GM12878 (cell line): ENCODE measurements at regions of chr1 and their contacts with region 1.

Region 1: GRCh38 chr1:26363549-26364448 is 8.8 kb downstream of the ZNF683 start:
- DNase-seq: peak; percentile 16
- ATAC-seq: peak; percentile 91
- H3K4me3 ChIP-seq: no peak overlapping the region
- H3K27ac ChIP-seq: no peak overlapping the region
- H3K4me1 ChIP-seq: no peaks in the 10 kb centered on the region; the same call in 1 of the 2 replicates
- H3K27me3 ChIP-seq: peaks cover 3 to 5% of the 10 kb centered on the region in 2 experiments; a peak in 3 of 4 replicates
- CTCF ChIP-seq: peak; percentile 85 to 98 (median 98)
- EP300 ChIP-seq: no peak
- POLR2A ChIP-seq: no peak
- RAD21 ChIP-seq: peak; percentile 81

Region 2: DNA sequence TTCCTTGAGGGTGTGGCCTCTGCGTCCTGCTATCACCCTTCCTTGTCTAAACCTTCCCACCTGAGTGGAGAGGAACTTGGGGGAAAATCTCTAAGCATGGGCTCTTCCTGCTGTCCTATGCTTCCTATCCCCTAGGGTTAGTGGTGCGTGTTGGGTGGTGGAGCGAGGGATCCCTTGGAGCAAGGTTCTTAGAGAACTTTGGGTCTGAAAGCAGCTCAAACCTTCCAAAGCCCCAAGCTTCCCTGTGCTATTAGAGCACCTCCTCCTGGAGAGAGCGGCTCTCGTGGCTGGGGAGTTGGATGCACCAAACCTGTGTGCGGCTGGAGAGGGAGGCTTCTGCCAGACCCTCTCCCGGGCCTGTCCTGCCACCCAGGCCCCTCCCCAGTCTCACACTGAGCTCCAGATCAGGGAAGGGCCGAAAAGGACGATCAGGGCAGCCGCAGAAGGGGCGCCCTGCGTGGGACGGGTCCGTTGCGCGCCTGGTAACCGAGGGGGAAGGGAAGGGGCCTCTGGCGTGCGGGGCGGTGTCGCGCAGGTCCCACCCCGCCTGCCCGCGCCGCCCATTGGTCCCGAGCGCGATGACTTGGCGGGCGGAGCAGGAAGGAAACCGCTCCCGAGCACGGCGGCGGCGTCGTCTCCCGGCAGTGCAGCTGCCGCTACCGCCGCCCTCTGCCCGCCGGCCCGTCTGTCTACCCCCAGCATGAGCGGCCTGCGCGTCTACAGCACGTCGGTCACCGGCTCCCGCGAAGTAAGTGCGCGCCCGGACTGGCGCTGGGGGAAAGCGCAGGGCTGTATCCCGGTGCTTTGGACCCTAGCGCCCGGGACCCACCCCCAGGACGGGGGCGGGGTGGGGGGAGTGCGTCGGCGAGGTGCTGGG is 84.1 kb before region 1 on chr1 and contains the start of gene SH3BGRL3:
- CTCF ChIA-PET with region 1: interaction called, 89 read pairs
- POLR2A ChIA-PET with region 1: no interaction called
- RAD21 ChIA-PET with region 1: interaction called, 29 read pairs
- SMC1A ChIA-PET with region 1: interaction called, 17 read pairs
- in situ Hi-C with region 1: no loop called
- intact Hi-C with region 1: loop called (anchors 2 kb)
- DNase-seq: no peak
- ATAC-seq: peak; percentile 92
- H3K4me3 ChIP-seq: peak within 1 kb of the TSS; percentile 88
- H3K27ac ChIP-seq: peak within 1 kb of the TSS; percentile 87
- H3K4me1 ChIP-seq: peaks cover 53% of the 10 kb centered on the region
- H3K27me3 ChIP-seq: no peaks in the 10 kb centered on the region
- CTCF ChIP-seq: peak; percentile 22 to 47 (median 41); a peak in 4 of 6 replicates
- EP300 ChIP-seq: no peak
- POLR2A ChIP-seq: peak; percentile 96
- RAD21 ChIP-seq: no peak
- polyA plus RNA-seq, gene SH3BGRL3: 121 to 129 TPM

Region 3: GRCh38 chr1:26378088-26378878 is 14.5 kb after region 1 on chr1:
- CTCF ChIA-PET with region 1: interaction called, 40 read pairs
- POLR2A ChIA-PET with region 1: interaction called, 3 read pairs
- RAD21 ChIA-PET with region 1: no interaction called
- SMC1A ChIA-PET with region 1: interaction called, 13 read pairs
- in situ Hi-C with region 1: no loop called
- intact Hi-C with region 1: no loop called
- DNase-seq: peak; percentile 73
- ATAC-seq: peak; percentile 97
- H3K4me3 ChIP-seq: peak overlapping the region; percentile 19; the same call in 1 of the 2 replicates
- H3K27ac ChIP-seq: peak overlapping the region; percentile 38
- H3K4me1 ChIP-seq: peaks cover 22% of the 10 kb centered on the region
- H3K27me3 ChIP-seq: no peaks in the 10 kb centered on the region
- CTCF ChIP-seq: no peak
- EP300 ChIP-seq: peak in 1 of 2 experiments; percentile 63; a peak in 2 of 4 replicates
- POLR2A ChIP-seq: no peak
- RAD21 ChIP-seq: no peak

Region 4: DNA sequence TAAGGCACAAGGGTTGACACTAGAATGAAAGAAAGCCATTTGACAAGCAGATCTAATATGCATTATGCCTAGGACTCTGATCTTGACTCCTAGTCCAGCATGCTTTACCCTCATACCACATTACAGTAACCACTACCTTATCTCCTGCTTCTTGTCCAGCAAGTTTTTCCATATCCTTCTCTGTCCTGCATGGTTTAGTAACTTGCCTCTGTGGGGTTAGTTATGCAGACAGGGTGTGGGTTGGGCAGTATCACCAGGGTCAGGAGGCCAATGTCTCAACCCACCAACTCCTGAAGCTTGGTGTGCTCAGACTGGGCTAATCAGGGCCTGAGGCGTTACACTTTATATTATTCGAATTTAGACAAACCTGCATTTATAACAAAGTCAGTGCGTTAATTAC is 87.1 kb after region 1 on chr1:
- CTCF ChIA-PET with region 1: no interaction called
- POLR2A ChIA-PET with region 1: no interaction called
- RAD21 ChIA-PET with region 1: no interaction called
- SMC1A ChIA-PET with region 1: no interaction called
- in situ Hi-C with region 1: no loop called
- intact Hi-C with region 1: no loop called
- DNase-seq: no peak
- ATAC-seq: no peak
- H3K4me3 ChIP-seq: no peak overlapping the region
- H3K27ac ChIP-seq: no peak overlapping the region
- H3K4me1 ChIP-seq: no peaks in the 10 kb centered on the region
- H3K27me3 ChIP-seq: no peaks in the 10 kb centered on the region
- CTCF ChIP-seq: no peak
- EP300 ChIP-seq: no peak
- POLR2A ChIP-seq: no peak
- RAD21 ChIP-seq: no peak